GM12878 (cell line): ENCODE measurements at regions of chr15 and their contacts with region 1.

Region 1: DNA sequence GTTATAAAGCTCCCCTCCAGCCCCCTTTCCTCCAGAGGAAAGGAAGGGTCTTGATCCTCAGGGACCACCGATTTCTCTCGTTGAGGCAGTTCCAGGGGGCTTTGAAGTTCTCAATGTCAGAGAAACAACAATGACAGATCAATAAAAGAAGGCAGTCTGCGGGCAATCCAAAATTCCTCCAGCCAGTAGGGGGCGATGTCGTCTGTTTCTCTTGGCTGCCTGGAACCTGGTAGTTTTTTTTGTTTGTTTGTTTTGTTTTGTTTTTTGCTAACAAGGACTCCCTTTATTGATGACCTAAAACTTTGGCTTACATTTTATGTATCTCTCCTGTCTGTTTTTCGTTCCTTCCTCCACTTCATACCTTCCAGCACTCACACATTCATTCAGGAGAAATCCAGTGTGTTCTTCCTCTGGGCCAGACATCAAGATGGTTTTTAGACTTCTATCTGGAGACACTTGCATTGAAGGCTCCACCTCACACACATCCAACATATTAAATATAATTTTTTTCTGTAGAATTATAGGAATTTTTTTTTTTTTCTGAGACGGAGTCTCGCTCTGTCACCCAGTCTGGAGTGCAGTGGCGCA is 276.6 kb downstream of the RPLP1 start:
- DNase-seq: no peak
- ATAC-seq: peak; percentile 55; the same call in 2 of the 3 replicates
- H3K4me3 ChIP-seq: no peak overlapping the region
- H3K27ac ChIP-seq: no peak overlapping the region
- H3K4me1 ChIP-seq: peaks cover 8% of the 10 kb centered on the region; the same call in 1 of the 2 replicates
- H3K27me3 ChIP-seq: peaks cover 0 to 5% of the 10 kb centered on the region in 2 experiments; a peak in 2 of 4 replicates
- CTCF ChIP-seq: peak; percentile 67 to 82 (median 71)
- EP300 ChIP-seq: no peak
- POLR2A ChIP-seq: no peak
- RAD21 ChIP-seq: peak; percentile 83

Region 2: DNA sequence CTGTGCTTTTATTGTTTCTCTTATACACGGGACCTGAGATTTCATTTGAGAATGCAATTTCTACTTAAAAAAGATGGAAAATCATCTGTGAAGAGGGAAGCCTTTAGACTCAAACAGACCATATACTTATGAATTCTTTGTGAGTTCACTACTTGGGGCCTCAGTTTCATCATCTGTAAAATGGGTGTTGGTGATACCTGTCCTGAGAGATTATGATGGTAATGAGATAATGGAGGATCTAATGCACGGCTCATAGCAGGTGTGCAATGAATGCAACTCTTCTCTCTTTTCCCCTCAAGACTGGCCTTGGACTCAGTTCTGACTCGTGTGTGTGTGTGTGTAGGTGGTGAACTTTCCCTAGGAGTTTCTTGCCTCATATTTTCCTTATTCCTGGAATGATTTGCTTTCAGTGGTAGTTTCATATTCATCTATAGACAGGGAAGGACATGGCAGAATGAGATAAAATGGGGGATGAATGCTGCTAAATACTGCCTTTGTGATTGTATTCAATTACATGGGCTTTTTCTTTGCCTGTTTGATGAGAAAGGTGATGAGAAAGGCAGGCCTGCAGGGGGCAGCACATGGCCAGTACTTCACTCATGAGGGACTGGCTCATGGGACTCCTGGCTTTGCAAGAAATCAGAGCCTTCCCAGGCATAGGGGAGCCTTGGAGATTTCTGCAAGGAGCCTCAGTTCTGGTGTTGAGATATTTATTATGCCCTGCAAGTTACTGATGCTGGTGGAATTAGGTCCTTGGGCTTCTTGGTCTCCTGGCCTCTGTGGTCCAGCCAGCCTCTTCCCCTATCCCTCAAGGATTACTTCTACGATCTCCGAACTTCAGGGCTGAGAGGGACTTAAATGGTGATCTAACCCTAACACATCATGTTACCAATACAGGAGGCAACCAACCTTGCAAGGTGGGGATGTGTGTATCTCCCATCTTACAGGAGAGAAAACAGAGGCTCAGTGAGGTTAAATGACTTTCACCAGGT is 205.9 kb before region 1 on chr15:
- CTCF ChIA-PET with region 1: interaction called, 3 read pairs
- POLR2A ChIA-PET with region 1: no interaction called
- RAD21 ChIA-PET with region 1: no interaction called
- SMC1A ChIA-PET with region 1: interaction called, 3 read pairs
- in situ Hi-C with region 1: no loop called
- intact Hi-C with region 1: loop called (anchors 5 kb)
- DNase-seq: no peak
- ATAC-seq: peak; percentile 66
- H3K4me3 ChIP-seq: no peak overlapping the region
- H3K27ac ChIP-seq: no peak overlapping the region
- H3K4me1 ChIP-seq: no peaks in the 10 kb centered on the region
- H3K27me3 ChIP-seq: peaks cover 4% of the 10 kb centered on the region in 2 experiments; a peak in 3 of 4 replicates
- CTCF ChIP-seq: peak; percentile 58 to 65 (median 60)
- EP300 ChIP-seq: no peak
- POLR2A ChIP-seq: no peak
- RAD21 ChIP-seq: peak; percentile 73

Region 3: GRCh38 chr15:69576035-69576526 is 153.2 kb before region 1 on chr15:
- CTCF ChIA-PET with region 1: interaction called, 9 read pairs
- POLR2A ChIA-PET with region 1: no interaction called
- RAD21 ChIA-PET with region 1: interaction called, 8 read pairs
- SMC1A ChIA-PET with region 1: interaction called, 6 read pairs
- in situ Hi-C with region 1: no loop called
- intact Hi-C with region 1: loop called (anchors 10 kb)
- DNase-seq: peak; percentile 13
- ATAC-seq: peak; percentile 93
- H3K4me3 ChIP-seq: no peak overlapping the region
- H3K27ac ChIP-seq: no peak overlapping the region
- H3K4me1 ChIP-seq: peaks cover 5% of the 10 kb centered on the region; the same call in 1 of the 2 replicates
- H3K27me3 ChIP-seq: peaks cover 0 to 3% of the 10 kb centered on the region in 2 experiments
- CTCF ChIP-seq: peak; percentile 71 to 76 (median 71)
- EP300 ChIP-seq: no peak
- POLR2A ChIP-seq: no peak
- RAD21 ChIP-seq: peak; percentile 71